Pancreas (tissue), 10 donors: ENCODE measurements at regions of chr4 and their contacts with region 1.

Region 1: GRCh38 chr4:77959566-77960338 is 97.1 kb downstream of the MRPL1 start:
- DNase-seq: no peak
- ATAC-seq: peak; percentile 55 to 72 (median 69)
- H3K4me3 ChIP-seq: no peak overlapping the region
- H3K27ac ChIP-seq: no peak overlapping the region
- H3K4me1 ChIP-seq: no peaks in the 10 kb centered on the region
- H3K27me3 ChIP-seq: no peaks in the 10 kb centered on the region
- CTCF ChIP-seq: peak; percentile 18 to 58 (median 50)

Region 2: DNA sequence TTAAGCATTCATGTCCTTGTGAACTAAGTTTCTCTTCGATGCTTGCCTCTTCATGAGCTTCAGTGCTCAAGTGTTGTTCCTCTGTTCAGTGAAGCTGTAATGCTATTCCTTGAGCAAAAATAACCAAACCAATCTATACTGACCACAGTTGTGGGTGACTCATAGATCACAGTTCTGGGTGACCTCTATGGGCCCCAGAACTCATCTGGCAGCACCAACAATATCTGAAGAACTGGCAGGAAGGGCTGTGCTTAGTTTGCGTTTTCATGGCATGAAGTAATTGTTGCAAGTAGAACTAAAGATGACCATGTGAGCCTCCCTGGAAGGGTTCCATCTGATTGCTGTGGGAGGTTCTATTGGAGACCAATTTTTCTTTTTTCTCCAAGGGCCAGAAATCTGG is 696.5 kb before region 1 on chr4:
- intact Hi-C with region 1: no loop called
- DNase-seq: no peak
- ATAC-seq: no peak
- H3K4me3 ChIP-seq: no peak overlapping the region
- H3K27ac ChIP-seq: no peak overlapping the region
- H3K4me1 ChIP-seq: no peaks in the 10 kb centered on the region
- H3K27me3 ChIP-seq: no peaks in the 10 kb centered on the region
- CTCF ChIP-seq: no peak

Region 3: DNA sequence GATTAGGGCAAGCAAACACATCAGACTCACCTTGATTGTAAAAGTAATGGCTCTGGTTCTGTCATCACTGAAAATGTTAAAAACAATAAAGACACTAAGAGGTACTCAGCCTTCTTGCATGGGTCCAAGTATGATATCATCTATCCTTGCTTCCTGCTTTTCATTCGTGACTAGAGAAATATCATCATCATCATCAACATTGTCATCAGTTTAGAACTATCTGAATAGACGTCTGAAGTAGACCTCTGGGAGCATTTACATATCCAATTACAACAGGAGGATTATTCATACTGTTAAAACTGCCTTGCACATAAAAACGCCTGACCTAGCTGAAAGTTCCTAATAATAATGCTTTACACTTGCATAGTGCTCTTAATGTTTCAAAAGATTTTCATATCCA is 87.6 kb after region 1 on chr4:
- intact Hi-C with region 1: no loop called
- DNase-seq: no peak
- ATAC-seq: no peak
- H3K4me3 ChIP-seq: no peak overlapping the region
- H3K27ac ChIP-seq: no peak overlapping the region
- H3K4me1 ChIP-seq: no peaks in the 10 kb centered on the region
- H3K27me3 ChIP-seq: no peaks in the 10 kb centered on the region
- CTCF ChIP-seq: no peak

Region 4: GRCh38 chr4:78517050-78517652 is 557.4 kb after region 1 on chr4:
- intact Hi-C with region 1: loop called in 2 of 3 experiments (anchors 10 kb)
- DNase-seq: no peak
- ATAC-seq: peak in 3 of 4 donors; percentile 70 to 81 (median 80)
- H3K4me3 ChIP-seq: no peak overlapping the region
- H3K27ac ChIP-seq: no peak overlapping the region
- H3K4me1 ChIP-seq: peaks cover 0 to 3% (median 0%) of the 10 kb centered on the region in 3 donors
- H3K27me3 ChIP-seq: no peaks in the 10 kb centered on the region
- CTCF ChIP-seq: peak; percentile 12 to 55 (median 34)

Region 5: GRCh38 chr4:78529569-78530209 is 569.9 kb after region 1 on chr4:
- intact Hi-C with region 1: loop called in 1 of 3 experiments (anchors 10 kb)
- DNase-seq: no peak
- ATAC-seq: no peak
- H3K4me3 ChIP-seq: no peak overlapping the region
- H3K27ac ChIP-seq: no peak overlapping the region
- H3K4me1 ChIP-seq: no peaks in the 10 kb centered on the region
- H3K27me3 ChIP-seq: no peaks in the 10 kb centered on the region
- CTCF ChIP-seq: no peak